ENCODE measurements at regions of chr2 and their contacts with region 1.

Region 1: GRCh38 chr2:143259368-143259958 is 130.2 kb downstream of the ARHGAP15 start:
- DNase-seq: peak; percentile 60
- ATAC-seq: peak; percentile 65 to 76

Region 2: GRCh38 chr2:142756430-142756829 is 503.0 kb before region 1 on chr2:
- intact Hi-C with region 1: no loop called
- DNase-seq: no peak
- ATAC-seq: no peak

Region 3: GRCh38 chr2:143034292-143035074 is 225.0 kb before region 1 on chr2:
- intact Hi-C with region 1: loop called in 1 of 2 experiments (anchors 10 kb)
- DNase-seq: peak; percentile 37
- ATAC-seq: peak; percentile 76 to 77

Region 4: DNA sequence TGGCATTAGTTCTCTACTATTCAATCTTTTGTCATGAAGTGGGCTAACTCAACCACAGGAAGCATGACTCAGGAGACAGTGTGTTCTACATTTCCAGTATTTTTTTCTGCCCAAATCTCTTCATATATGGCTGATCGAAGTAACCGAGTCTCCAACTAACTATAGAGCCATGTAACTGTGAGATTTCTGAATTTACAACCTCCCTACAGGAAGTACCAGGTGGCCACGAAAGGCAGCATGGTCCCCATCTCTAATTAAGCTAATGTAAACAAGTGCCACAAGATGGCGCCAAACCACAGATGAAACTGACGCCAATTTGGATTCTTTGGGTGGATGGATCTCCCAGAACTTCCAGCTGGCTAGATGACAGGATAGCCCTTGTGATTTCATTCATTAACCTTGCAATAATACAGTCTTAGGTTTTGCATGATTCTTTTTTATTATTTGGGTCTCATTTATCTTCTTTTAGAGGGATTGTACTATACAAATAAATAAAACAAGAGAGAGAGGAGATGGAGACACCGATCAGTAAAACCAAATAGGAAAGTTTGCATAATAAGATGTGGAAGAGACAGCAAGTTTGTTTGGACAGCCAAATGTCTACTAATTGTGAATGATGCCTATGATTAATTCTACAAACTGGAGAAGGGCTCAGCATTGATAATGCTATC is 148.6 kb before region 1 on chr2:
- intact Hi-C with region 1: loop called in 1 of 2 experiments (anchors 2 kb)
- DNase-seq: peak; percentile 61
- ATAC-seq: peak; percentile 61 to 70

Region 5: GRCh38 chr2:143468341-143468888 is 209.0 kb after region 1 on chr2:
- intact Hi-C with region 1: no loop called
- DNase-seq: no peak
- ATAC-seq: no peak

Measured in left cardiac atrium (tissue), 4 donors.